GM12878 (cell line): ENCODE measurements at regions of chr2 and their contacts with region 1.

Region 1: DNA sequence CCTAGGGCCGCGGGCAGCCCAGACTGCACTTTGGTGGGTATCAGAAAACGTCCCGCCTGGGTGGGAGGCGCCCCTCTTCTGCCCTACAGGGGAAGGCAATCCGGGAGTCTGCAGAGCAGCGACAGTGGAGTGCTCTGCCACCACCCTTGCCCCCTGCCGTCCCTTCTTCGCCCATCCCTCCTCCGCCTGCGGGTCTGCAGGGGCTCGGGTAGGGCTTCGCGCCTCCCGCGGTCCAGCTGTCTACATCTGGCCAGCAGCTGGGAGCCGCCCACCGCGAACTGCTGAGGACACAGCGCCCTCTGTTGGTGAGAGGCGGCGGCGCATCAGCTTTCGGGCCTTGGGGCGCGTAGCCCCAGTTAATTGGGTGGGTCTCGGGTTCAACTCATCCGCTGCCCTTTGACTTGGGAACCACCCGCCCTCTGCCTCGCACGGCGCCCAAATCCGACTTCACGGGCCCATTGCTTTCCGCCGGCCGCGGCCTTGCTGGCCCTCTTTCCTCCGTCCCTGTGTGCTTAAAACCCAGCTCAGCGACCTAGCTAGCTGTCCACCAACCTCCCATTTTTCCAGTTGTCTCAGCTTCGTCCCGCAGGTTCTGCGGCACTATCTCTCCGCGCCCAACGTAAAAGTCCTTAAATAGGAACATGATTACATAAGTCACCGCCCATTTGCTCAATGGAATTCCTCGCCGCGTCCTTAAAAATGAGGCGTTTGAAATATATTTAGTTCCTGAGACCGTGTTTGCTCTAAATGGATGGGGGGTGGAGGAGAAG is 17.6 kb downstream of the WNT10A start:
- DNase-seq: no peak
- ATAC-seq: peak; percentile 54
- H3K4me3 ChIP-seq: peak overlapping the region; percentile 67; the same call in 1 of the 2 replicates
- H3K27ac ChIP-seq: peak overlapping the region; percentile 95; the same call in 1 of the 2 replicates
- H3K4me1 ChIP-seq: peaks cover 40% of the 10 kb centered on the region
- H3K27me3 ChIP-seq: no peaks in the 10 kb centered on the region
- CTCF ChIP-seq: peak; percentile 93 to 98 (median 98)
- EP300 ChIP-seq: no peak
- POLR2A ChIP-seq: no peak; the same call in 1 of the 2 replicates
- RAD21 ChIP-seq: peak; percentile 94

Region 2: GRCh38 chr2:218568190-218569037 is 329.9 kb before region 1 on chr2 and contains the starts of genes CNOT9 and USP37:
- CTCF ChIA-PET with region 1: interaction called, 3 read pairs
- POLR2A ChIA-PET with region 1: no interaction called
- RAD21 ChIA-PET with region 1: interaction called, 4 read pairs
- SMC1A ChIA-PET with region 1: no interaction called
- in situ Hi-C with region 1: no loop called
- intact Hi-C with region 1: loop called (anchors 1 kb)
- DNase-seq: peak; percentile 94
- ATAC-seq: peak; percentile 84
- H3K4me3 ChIP-seq: peak within 1 kb of the TSS; percentile 95
- H3K27ac ChIP-seq: peak within 1 kb of the TSS; percentile 98
- H3K4me1 ChIP-seq: peaks cover 8% of the 10 kb centered on the region; the same call in 1 of the 2 replicates
- H3K27me3 ChIP-seq: no peaks in the 10 kb centered on the region
- CTCF ChIP-seq: no peak
- EP300 ChIP-seq: no peak
- POLR2A ChIP-seq: peak; percentile 88
- RAD21 ChIP-seq: no peak
- polyA plus RNA-seq, gene CNOT9: 51.0 to 58.5 TPM
- polyA plus RNA-seq, gene USP37: 2.8 to 4.1 TPM

Region 3: GRCh38 chr2:218732761-218733158 is 165.5 kb before region 1 on chr2:
- CTCF ChIA-PET with region 1: no interaction called
- POLR2A ChIA-PET with region 1: no interaction called
- RAD21 ChIA-PET with region 1: no interaction called
- SMC1A ChIA-PET with region 1: no interaction called
- in situ Hi-C with region 1: no loop called
- intact Hi-C with region 1: no loop called
- DNase-seq: no peak
- ATAC-seq: no peak
- H3K4me3 ChIP-seq: no peak overlapping the region
- H3K27ac ChIP-seq: peak overlapping the region; percentile 72; the same call in 1 of the 2 replicates
- H3K4me1 ChIP-seq: peaks cover 12% of the 10 kb centered on the region
- H3K27me3 ChIP-seq: no peaks in the 10 kb centered on the region
- CTCF ChIP-seq: no peak
- EP300 ChIP-seq: no peak
- POLR2A ChIP-seq: no peak
- RAD21 ChIP-seq: no peak

Region 4: DNA sequence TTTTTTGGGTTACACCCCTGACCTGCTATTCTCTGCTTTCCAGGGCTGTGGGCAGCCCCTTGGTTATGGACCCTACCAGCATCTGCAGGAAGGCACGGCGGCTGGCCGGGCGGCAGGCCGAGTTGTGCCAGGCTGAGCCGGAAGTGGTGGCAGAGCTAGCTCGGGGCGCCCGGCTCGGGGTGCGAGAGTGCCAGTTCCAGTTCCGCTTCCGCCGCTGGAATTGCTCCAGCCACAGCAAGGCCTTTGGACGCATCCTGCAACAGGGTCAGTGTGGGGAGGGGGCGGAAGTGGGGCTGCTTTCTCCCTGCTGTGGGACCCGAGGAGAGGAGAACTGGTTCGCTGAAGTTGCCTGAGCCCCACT is 27.3 kb before region 1 on chr2:
- CTCF ChIA-PET with region 1: interaction called, 1,364 read pairs
- POLR2A ChIA-PET with region 1: interaction called, 360 read pairs
- RAD21 ChIA-PET with region 1: interaction called, 871 read pairs
- SMC1A ChIA-PET with region 1: interaction called, 780 read pairs
- in situ Hi-C with region 1: no loop called
- intact Hi-C with region 1: loop called (anchors 1 kb)
- DNase-seq: no peak
- ATAC-seq: no peak
- H3K4me3 ChIP-seq: no peak overlapping the region
- H3K27ac ChIP-seq: no peak overlapping the region
- H3K4me1 ChIP-seq: peaks cover 21% of the 10 kb centered on the region
- H3K27me3 ChIP-seq: peaks cover 13 to 30% of the 10 kb centered on the region in 2 experiments
- CTCF ChIP-seq: no peak
- EP300 ChIP-seq: no peak
- POLR2A ChIP-seq: no peak
- RAD21 ChIP-seq: no peak

Region 5: GRCh38 chr2:218908721-218909619 is 10.7 kb after region 1 on chr2:
- CTCF ChIA-PET with region 1: interaction called, 57 read pairs
- POLR2A ChIA-PET with region 1: interaction called, 4 read pairs
- RAD21 ChIA-PET with region 1: interaction called, 40 read pairs
- SMC1A ChIA-PET with region 1: interaction called, 59 read pairs
- in situ Hi-C with region 1: no loop called
- intact Hi-C with region 1: no loop called
- DNase-seq: peak; percentile 89
- ATAC-seq: peak; percentile 97
- H3K4me3 ChIP-seq: peak overlapping the region; percentile 73
- H3K27ac ChIP-seq: peak overlapping the region; percentile 63
- H3K4me1 ChIP-seq: peaks cover 8% of the 10 kb centered on the region
- H3K27me3 ChIP-seq: no peaks in the 10 kb centered on the region
- CTCF ChIP-seq: no peak
- EP300 ChIP-seq: 0 out of 4 replicates have a peak, but pooled peaks of 1 of the 2 experiments have one; percentile 22
- POLR2A ChIP-seq: peak; percentile 70; the same call in 1 of the 2 replicates
- RAD21 ChIP-seq: no peak

Region 6: DNA sequence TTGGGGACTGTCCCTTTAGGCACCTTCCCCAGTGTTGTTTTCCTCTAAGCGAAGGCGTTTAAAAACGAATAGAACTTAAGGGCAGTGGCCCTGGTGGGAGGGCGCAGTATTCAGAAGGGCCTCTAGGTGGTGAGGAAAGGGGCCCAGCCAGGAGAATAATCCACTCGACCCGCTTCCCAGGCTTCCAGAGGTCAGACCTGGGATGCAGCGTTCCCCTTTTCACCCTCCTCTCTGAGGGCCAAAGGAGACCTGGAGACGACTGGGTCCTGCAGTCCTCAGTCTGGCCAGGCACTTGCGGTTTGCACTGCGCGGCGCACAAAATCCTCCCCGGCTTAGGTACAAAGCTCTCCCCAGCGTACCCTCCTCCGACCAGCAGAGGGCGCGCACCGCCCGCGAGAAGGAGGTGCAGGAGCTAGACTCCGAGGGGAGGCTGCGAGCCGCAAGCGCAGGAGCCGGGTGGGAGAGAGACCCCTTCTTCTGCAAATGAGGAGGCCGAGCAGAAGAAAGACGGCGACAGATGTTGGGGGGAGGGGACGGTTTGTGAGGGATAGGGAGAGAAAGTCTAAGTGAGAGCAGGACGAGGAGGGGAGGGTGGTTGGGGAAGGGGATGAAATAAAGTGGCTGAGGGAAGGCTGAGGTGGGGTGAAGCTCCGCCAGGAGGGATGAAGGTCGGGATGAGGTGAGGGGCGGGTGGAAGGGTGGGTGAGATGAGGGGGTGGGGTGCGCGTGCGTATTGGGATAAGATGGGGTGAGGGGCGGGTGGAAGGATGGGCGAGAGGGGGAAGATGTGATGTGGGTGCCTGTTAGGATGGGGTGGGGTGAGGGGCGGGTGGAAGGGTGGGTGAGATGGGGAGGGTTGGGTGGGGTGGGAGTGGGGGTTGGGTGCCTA is 81.8 kb after region 1 on chr2:
- CTCF ChIA-PET with region 1: interaction called, 11 read pairs
- POLR2A ChIA-PET with region 1: no interaction called
- RAD21 ChIA-PET with region 1: interaction called, 14 read pairs
- SMC1A ChIA-PET with region 1: interaction called, 3 read pairs
- in situ Hi-C with region 1: no loop called
- intact Hi-C with region 1: no loop called
- DNase-seq: peak; percentile 24
- ATAC-seq: peak; percentile 99
- H3K4me3 ChIP-seq: 0 out of 2 replicates have a peak overlapping the region, but pooled peaks have one; percentile 44
- H3K27ac ChIP-seq: no peak overlapping the region
- H3K4me1 ChIP-seq: no peaks in the 10 kb centered on the region; the same call in 1 of the 2 replicates
- H3K27me3 ChIP-seq: peaks cover 24 to 30% of the 10 kb centered on the region in 2 experiments
- CTCF ChIP-seq: peak; percentile 87 to 93 (median 88)
- EP300 ChIP-seq: no peak
- POLR2A ChIP-seq: no peak
- RAD21 ChIP-seq: peak; percentile 69